ENCODE measurements at regions of chr16 and their contacts with region 1.

Region 1: DNA sequence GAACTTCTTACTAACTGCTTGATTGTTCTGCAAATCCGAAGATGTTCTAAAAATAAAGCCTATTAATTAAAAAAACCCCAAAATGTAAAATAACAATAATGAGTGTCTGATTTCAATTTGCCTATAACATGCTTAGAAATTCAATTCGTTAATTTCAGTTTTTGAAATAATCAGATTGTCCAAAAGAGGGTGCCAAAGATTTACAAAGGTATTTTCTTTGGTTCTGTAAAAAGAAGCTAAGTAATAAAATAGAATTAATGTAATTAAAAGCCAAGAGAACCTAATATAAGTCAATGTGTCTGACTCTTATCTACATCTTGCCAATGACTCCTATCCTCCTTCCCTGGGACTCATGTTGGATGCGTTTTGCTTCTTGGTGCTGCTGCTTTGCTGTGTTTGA is 75.0 kb upstream of the CPHXL start:
- DNase-seq: no peak
- H3K4me3 ChIP-seq: no peak overlapping the region
- H3K27ac ChIP-seq: no peak overlapping the region
- H3K4me1 ChIP-seq: no peaks in the 10 kb centered on the region
- H3K27me3 ChIP-seq: no peaks in the 10 kb centered on the region
- CTCF ChIP-seq: peak; percentile 35 to 46

Region 2: GRCh38 chr16:74582970-74583369 is 1218.3 kb before region 1 on chr16:
- CTCF ChIA-PET with region 1: no interaction called
- dilution Hi-C with region 1: no loop called
- in situ Hi-C with region 1: no loop called
- intact Hi-C with region 1: no loop called
- DNase-seq: no peak
- H3K4me3 ChIP-seq: no peak overlapping the region
- H3K27ac ChIP-seq: no peak overlapping the region
- H3K4me1 ChIP-seq: peaks cover 9% of the 10 kb centered on the region
- H3K27me3 ChIP-seq: no peaks in the 10 kb centered on the region
- CTCF ChIP-seq: no peak

Region 3: GRCh38 chr16:76059186-76059585 is 257.9 kb after region 1 on chr16:
- CTCF ChIA-PET with region 1: no interaction called
- dilution Hi-C with region 1: no loop called
- in situ Hi-C with region 1: no loop called
- intact Hi-C with region 1: loop called (anchors 10 kb)
- DNase-seq: peak; percentile 86
- H3K4me3 ChIP-seq: peak overlapping the region in 1 of 3 experiments; percentile 13
- H3K27ac ChIP-seq: peak overlapping the region; percentile 86
- H3K4me1 ChIP-seq: peaks cover 19% of the 10 kb centered on the region
- H3K27me3 ChIP-seq: no peaks in the 10 kb centered on the region
- CTCF ChIP-seq: no peak

Region 4: GRCh38 chr16:76265434-76266045 is 464.2 kb after region 1 on chr16:
- CTCF ChIA-PET with region 1: interaction called, 10 read pairs
- dilution Hi-C with region 1: no loop called
- in situ Hi-C with region 1: no loop called
- intact Hi-C with region 1: loop called (anchors 10 kb)
- DNase-seq: peak; percentile 26
- H3K4me3 ChIP-seq: no peak overlapping the region
- H3K27ac ChIP-seq: no peak overlapping the region
- H3K4me1 ChIP-seq: no peaks in the 10 kb centered on the region
- H3K27me3 ChIP-seq: no peaks in the 10 kb centered on the region
- CTCF ChIP-seq: peak; percentile 55 to 67

Region 5: GRCh38 chr16:76653390-76654026 is 852.2 kb after region 1 on chr16:
- CTCF ChIA-PET with region 1: interaction called, 4 read pairs
- dilution Hi-C with region 1: loop called (anchors 25 kb)
- in situ Hi-C with region 1: no loop called
- intact Hi-C with region 1: loop called (anchors 1 kb)
- DNase-seq: peak; percentile 53
- H3K4me3 ChIP-seq: no peak overlapping the region
- H3K27ac ChIP-seq: no peak overlapping the region
- H3K4me1 ChIP-seq: no peaks in the 10 kb centered on the region
- H3K27me3 ChIP-seq: no peaks in the 10 kb centered on the region
- CTCF ChIP-seq: peak; percentile 70 to 83

Region 6: GRCh38 chr16:77043076-77043475 is 1241.8 kb after region 1 on chr16:
- CTCF ChIA-PET with region 1: no interaction called
- dilution Hi-C with region 1: no loop called
- in situ Hi-C with region 1: no loop called
- intact Hi-C with region 1: loop called (anchors 10 kb)
- DNase-seq: peak; percentile 1
- H3K4me3 ChIP-seq: no peak overlapping the region
- H3K27ac ChIP-seq: no peak overlapping the region
- H3K4me1 ChIP-seq: no peaks in the 10 kb centered on the region
- H3K27me3 ChIP-seq: no peaks in the 10 kb centered on the region
- CTCF ChIP-seq: peak; percentile 31 to 60

Measured in mammary epithelial cell (primary cell).